ENCODE measurements at regions of chr6 and their contacts with region 1.

Region 1: DNA sequence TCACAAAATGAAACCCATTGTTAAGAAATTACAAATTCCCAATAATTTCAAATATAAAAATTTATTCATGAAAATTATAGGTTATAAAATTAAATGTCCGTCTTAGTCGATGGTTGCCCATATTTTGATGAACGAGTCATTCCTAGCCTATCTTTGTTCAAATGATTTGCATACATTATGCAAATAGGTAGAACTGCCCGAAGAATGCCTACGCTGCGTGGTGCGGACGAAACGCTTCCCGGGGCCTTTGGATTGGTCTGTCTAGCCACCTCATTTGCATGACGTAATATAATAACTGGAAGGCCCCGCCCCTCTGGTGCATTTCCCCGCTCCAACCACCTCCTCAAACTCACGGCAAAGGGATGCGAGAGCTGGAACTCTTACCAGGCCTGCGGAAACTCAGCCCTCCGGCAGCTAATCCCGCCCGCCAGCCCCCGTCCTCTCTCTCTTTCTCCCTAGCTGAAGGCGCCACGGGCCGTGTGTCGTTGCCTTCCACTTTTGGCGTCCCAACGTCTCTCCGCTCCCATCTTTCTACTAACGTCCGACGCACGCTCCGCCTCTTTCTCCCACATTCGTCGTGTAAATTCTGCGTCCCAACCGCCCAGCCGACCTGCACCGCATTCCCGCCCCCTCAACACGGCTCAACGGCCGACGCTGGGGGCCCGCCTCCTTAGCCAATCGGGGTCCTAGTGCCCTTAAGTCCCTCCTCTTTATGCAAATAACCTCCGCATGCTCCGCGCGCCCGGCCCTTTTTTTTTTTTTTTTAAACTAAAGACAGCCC is 520 bp upstream of the PRRC2A start:
- DNase-seq: peak; percentile 98

Region 2: DNA sequence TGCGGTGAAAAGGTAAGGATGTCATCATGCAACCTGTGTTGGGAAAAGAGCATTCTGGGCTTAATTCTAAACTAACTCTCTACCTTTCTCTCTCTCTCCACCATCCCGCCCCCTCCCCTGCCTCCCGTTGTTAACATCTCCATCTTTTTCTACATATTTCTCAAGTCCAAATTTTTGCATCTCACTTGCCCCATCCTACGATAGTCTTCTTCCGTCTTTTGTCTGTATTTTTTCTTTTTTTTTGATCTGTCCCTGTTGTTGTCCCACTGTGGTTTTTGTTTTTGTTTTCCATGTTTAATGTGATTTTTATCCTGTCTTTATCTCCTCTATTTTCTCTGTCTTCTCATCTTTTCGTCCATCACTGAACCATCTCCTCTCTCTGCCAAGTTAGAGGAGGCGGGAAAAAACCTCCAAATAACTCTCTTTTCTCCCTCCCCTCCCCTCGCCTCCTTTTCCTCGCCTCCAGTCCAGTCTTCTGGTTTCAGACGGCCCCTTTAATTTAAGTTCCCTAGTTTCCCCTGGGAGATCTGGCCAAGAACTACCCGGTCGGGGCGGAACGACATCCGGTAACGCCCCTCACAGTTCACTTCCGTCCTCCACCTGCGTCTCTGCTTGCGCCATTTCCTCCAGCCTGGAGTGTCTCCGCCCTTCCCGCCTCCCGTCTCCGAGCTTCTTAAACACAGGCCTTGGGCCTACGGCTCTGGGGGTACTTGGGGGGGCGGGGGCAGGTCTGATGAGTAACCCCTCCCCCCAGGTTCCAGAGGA is 72.9 kb before region 1 on chr6 and contains the start of gene NFKBIL1:
- CTCF ChIA-PET with region 1: interaction called, 3 read pairs
- POLR2A ChIA-PET with region 1: interaction called, 15 read pairs
- DNase-seq: peak; percentile 94

Region 3: DNA sequence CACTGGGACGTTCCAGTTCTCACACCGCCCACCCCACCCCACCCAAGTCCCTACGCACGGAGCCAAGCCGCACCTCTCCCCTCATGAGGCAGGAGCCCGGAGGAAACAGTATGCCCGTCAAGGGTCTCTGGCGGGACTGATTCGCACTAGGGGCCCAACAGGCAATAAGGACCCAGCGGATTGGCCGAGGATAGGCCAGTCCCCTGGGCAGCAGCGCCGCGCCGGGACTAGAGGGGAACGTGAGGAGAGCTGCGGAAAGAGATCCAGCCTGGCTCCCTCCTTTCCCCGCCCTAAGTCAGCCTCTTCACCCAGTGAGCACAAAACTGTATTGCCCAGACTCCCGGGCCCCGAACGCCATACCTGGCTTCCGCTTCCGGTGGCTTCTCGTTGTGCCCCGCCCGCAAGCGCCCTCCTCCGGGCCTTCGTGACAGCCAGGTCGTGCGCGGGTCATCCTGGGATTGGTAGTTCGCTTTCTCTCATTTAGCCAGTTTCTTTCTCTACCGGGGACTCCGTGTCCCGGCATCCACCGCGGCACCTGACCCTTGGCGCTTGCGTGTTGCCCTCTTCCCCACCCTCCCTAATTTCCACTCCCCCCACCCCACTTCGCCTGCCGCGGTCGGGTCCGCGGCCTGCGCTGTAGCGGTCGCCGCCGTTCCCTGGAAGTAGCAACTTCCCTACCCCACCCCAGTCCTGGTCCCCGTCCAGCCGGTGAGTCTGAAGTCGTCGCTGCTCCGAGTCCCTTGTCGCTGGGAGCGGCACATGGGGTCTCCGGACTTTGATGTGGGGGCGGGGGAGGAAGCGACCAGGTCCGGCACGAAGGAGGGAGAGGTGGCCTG is 45.7 kb after region 1 on chr6 and contains the start of gene CSNK2B:
- CTCF ChIA-PET with region 1: interaction called, 4 read pairs
- POLR2A ChIA-PET with region 1: interaction called, 14 read pairs
- DNase-seq: peak; percentile 98

Measured in HEK293T (cell line).